Posterior vena cava (tissue), 2 donors: ENCODE measurements at regions of chr15 and their contacts with region 1.

Region 1: GRCh38 chr15:67065444-67066093 is at the start of gene SMAD3:
- DNase-seq: peak; percentile 97
- total RNA-seq, gene SMAD3: 56.3 to 62.7 TPM

Region 2: DNA sequence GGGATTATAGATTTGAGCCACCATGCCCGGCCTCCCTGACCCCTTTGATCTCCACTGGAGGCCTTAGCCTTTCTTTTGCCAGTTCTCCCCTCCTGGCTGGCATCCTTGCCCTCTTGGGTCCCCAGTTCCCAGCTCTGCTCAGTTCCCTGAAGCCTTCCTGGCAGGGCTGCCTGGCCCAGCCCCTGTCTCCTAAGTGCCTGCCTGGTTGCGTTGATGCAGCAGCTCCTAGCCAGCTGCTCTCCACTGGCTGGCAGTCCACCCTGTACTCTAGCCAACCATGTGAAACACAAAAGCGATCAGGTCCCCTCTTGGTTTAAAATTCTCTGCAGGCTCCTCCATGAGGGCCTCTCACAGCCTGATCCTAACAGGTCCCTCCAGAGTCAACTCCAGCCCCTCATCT is 1011.6 kb before region 1 on chr15:
- intact Hi-C with region 1: no loop called
- DNase-seq: no peak

Region 3: GRCh38 chr15:67024314-67024997 is 41.1 kb before region 1 on chr15:
- intact Hi-C with region 1: loop called in 1 of 2 experiments (anchors 2 kb)
- DNase-seq: peak; percentile 92

Region 4: DNA sequence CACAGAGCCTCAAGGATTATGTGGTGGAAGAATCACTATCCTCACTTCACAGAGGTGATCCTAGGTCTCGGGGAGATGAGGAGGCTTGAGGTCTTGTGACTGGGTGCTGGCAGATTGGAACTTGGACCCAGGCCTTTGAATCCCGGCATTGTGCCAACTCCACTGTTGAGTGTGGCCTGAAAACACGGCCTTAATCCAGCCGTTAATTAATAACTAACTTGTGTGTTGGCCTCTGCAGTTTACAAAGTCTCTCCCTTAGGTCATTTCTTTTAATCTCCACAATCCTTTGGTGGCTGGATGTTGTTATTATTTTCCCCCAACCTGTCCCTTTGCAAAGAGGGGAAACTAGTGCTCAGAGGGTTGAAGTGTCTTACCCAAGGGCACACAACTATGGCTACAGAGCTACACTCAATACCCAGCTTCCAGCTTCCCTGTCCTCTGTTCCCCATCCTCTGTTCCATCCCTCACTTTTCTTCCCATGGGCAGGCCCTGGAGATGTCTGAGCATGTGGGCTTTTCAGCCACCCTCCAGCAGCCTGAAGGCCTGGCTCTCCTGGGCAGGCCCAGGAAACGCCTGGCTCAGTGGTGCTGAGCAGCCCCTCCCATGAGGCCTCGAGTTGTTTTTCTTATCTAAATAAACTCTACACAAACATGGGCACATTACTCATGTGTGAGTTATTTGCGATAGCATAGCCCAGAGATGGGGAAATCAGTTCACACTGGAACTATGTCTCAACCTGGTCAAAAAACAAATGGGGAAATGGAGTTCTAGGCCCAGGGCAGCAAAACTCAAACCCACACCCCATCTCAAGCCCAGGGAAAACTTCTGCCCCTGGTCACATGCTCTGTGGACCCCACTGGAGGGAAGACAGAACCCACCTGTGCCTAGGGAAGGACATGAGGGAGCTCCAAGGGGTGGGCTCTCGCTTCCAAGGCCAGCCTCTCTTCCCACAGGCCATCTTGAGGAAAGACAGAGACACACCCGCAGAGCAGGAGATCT is 17.0 kb before region 1 on chr15:
- intact Hi-C with region 1: no loop called
- DNase-seq: no peak

Region 5: DNA sequence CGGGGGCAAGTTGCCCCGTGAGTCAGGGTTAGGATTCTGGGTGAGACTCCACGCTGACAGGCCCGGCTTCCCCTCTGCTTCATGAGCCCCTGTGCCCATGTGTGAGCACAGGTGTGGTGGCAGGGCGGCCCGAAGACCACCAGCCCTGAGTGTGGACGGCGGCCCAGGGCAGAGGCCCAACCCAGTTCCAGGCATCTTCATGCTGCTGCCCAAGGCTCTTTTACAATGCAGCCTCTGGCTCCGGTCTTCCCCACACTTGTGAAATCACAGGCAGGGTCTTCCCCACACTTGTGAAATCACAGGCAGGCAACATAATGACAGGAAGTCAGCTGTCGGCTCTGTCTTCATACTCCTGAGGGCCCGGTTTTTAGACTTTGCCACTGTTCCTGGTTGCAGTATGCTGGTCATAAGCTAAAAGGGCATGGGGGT is 110.1 kb after region 1 on chr15:
- intact Hi-C with region 1: loop called in 1 of 2 experiments (anchors 10 kb)
- DNase-seq: peak; percentile 85

Region 6: GRCh38 chr15:67188551-67189218 is 123.1 kb after region 1 on chr15:
- intact Hi-C with region 1: loop called in 1 of 2 experiments (anchors 5 kb)
- DNase-seq: no peak

Region 7: GRCh38 chr15:67349634-67350033 is 284.1 kb after region 1 on chr15:
- intact Hi-C with region 1: no loop called
- DNase-seq: no peak